ENCODE measurements at regions of chr22 and their contacts with region 1.

Region 1: DNA sequence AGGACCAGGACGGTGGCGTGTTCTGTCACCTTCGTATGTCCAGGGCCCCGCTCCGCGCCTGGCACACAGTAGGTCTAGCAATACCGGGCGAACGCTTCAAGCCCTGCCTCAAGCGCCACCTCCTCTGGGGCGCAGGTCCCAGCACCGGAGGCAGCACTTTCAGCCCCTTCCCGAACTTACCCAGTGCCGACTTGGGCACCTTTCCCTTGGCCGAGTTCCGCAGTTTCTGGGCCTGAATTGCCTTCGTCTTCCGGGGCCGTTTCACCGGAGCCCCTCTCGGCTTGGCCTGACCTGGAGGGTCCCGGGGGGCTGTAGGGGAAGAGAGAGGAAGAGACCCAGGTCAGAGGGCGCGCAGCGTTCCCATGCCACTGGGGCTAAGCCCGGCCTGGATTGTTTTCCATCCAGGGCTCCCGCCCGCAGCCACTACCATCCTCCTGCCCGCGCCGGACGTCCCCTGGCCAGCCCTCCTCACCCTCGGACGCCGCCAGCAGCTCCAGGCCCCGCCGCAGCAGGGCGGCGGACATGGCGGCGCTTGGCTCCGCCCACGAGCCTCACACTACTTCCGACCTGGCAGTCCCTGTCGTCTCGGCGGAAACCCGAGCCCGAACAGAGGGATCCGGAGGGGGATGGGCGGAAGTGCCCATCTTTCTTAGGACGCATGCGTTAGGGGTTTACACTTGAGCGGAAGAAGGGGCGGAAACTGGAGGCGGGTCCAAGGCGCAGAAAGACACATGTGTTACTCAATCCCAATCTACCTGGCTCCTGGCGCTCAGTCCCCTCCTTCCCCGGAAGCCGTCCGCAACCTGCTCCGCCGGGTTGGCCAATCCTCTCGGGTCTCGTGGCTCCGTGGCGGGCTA is at the start of gene RPS19BP1:
- DNase-seq: peak; percentile 96 to 99 (median 98)
- H3K4me3 ChIP-seq: peak within 1 kb of the TSS; percentile 58 to 100 (median 94)
- H3K27ac ChIP-seq: peak within 1 kb of the TSS; percentile 53 to 98 (median 93)
- H3K27me3 ChIP-seq: no peaks in the 10 kb centered on the region
- CTCF ChIP-seq: peak in 45 of 56 donors; percentile 4 to 56 (median 34)
- total RNA-seq, gene RPS19BP1: 44.3 to 109 (median 63.6) TPM

Region 2: DNA sequence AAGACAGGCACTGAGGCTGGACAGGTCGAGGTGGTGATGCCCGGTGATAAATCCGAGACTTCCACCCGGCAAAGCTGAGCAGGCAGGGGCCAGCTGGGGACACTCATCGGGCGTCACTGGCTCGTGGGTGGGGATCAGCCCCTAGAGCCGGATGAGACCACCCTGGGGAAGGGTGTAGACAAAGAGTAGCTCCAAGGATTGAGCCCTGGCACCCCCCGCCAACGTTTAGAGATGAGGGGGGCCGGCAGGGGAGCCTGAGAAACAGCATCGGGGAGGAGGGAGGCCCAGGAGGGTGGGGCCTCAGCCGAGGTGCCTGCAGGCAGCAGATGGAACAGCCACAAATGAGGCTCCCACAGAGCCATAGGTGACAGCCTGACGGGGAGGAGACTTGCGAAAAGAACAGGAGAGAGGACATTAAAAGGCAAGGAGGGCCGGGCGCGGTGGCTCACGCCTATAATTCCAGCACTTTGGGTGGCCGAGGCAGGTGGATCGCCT is 352.6 kb before region 1 on chr22:
- intact Hi-C with region 1: no loop called
- DNase-seq: no peak
- H3K4me3 ChIP-seq: no peak overlapping the region
- H3K27ac ChIP-seq: no peak overlapping the region
- H3K27me3 ChIP-seq: no peaks in the 10 kb centered on the region
- CTCF ChIP-seq: no peak

Region 3: GRCh38 chr22:39319270-39320022 is 213.0 kb before region 1 on chr22 and contains the start of gene RPL3:
- intact Hi-C with region 1: loop called in 1 of 2 experiments (anchors 5 kb)
- DNase-seq: peak; percentile 96 to 98 (median 97)
- H3K4me3 ChIP-seq: peak within 1 kb of the TSS; percentile 60 to 95 (median 79)
- H3K27ac ChIP-seq: peak within 1 kb of the TSS; percentile 91 to 100 (median 99)
- H3K27me3 ChIP-seq: no peaks in the 10 kb centered on the region
- CTCF ChIP-seq: peak in 48 of 56 donors; percentile 25 to 72 (median 50)
- total RNA-seq, gene RPL3: 562 to 963 (median 699) TPM

Region 4: GRCh38 chr22:39414886-39415285 is 117.6 kb before region 1 on chr22:
- intact Hi-C with region 1: no loop called
- DNase-seq: peak in 2 of 10 donors; percentile 55 to 85
- H3K4me3 ChIP-seq: no peak overlapping the region
- H3K27ac ChIP-seq: peak overlapping the region in 24 of 59 donors; percentile 1 to 73 (median 36)
- H3K27me3 ChIP-seq: no peaks in the 10 kb centered on the region
- CTCF ChIP-seq: no peak

Region 5: DNA sequence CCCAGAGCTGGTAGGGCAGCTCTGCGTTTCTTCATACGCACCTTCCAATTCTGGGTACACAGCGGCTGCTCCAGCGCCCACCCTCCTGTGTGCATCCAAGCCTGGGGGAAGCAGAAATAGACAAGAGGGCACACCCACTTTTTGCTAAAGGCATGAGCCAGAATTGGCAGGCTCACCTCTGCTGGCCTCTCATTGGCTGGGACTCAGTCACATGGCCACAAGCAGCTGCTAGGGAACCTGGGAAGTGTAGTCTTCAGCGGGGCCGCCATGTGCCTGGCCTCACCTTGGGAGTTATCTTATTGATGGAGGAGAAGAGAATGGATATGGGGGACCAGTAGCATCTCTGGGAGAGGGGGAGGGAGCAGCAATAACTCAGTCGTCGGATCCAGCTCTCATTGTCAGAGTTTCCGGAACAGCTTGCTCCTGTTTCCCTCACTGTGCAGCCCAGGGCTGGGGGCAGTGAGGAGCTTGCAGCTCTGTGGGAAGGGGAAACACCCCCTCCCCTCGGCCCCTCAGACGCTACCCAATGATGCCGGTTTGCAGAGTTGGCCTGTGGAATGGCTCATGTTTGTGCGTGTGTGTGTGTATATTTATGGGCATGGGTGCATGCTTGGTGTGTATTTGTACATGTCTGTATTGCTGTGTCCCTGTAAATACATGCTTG is 42.2 kb before region 1 on chr22:
- intact Hi-C with region 1: loop called in 1 of 2 experiments (anchors 5 kb)
- DNase-seq: peak; percentile 80 to 94 (median 88)
- H3K4me3 ChIP-seq: peak overlapping the region in 14 of 59 donors; percentile 0 to 45 (median 10)
- H3K27ac ChIP-seq: peak overlapping the region in 46 of 59 donors; percentile 1 to 84 (median 52)
- H3K27me3 ChIP-seq: no peaks in the 10 kb centered on the region
- CTCF ChIP-seq: no peak

Region 6: GRCh38 chr22:39643311-39644083 is 111.1 kb after region 1 on chr22:
- intact Hi-C with region 1: no loop called
- DNase-seq: peak in 1 of 10 donors; percentile 26
- H3K4me3 ChIP-seq: no peak overlapping the region
- H3K27ac ChIP-seq: peak overlapping the region in 6 of 59 donors; percentile 8 to 60 (median 29)
- H3K27me3 ChIP-seq: peaks cover 0 to 3% (median 0%) of the 10 kb centered on the region in 45 donors
- CTCF ChIP-seq: no peak

Region 7: DNA sequence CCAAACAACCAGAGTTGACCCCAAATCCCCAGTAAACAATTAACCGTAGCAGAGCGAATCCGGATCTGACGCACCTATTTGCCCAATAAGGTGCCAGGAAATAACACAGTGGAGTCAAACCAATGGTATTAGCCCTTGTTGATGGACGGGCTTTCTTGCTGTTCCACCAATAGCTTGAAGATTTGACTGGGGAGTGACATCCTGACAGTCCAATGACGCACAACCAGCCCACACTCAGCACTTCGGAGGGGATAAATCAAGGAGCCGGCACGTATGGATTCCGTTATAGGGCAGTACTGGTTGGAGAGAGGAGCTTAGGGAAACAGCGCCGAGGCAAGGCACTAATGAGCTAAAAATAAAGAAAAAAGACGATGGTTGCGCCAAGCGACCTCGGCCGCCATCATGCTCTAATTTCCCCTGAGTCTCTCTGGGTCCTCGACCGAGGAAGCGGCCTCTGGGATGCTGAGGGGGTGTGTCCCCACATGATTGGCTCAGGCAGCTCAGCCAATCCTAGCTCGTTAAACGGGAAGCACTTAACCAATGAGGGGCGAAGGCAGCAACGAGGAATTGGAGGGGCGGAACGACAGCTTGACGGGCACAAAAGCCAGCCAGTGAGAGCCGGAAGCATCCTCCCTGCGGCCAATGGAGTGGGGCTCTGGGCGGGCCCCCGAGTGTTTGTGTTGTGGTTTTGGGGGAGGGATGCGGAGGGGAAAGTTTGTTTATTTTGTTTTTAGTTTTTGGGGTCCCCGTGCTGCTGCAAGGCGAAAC is 511.8 kb after region 1 on chr22:
- intact Hi-C with region 1: loop called (anchors 5 kb)
- DNase-seq: peak; percentile 93 to 98 (median 98)
- H3K4me3 ChIP-seq: peak overlapping the region; percentile 50 to 98 (median 82)
- H3K27ac ChIP-seq: peak overlapping the region; percentile 80 to 100 (median 98)
- H3K27me3 ChIP-seq: peaks cover 0 to 22% (median 0%) of the 10 kb centered on the region in 45 donors
- CTCF ChIP-seq: peak in 7 of 56 donors; percentile 6 to 30 (median 13)

Region 8: DNA sequence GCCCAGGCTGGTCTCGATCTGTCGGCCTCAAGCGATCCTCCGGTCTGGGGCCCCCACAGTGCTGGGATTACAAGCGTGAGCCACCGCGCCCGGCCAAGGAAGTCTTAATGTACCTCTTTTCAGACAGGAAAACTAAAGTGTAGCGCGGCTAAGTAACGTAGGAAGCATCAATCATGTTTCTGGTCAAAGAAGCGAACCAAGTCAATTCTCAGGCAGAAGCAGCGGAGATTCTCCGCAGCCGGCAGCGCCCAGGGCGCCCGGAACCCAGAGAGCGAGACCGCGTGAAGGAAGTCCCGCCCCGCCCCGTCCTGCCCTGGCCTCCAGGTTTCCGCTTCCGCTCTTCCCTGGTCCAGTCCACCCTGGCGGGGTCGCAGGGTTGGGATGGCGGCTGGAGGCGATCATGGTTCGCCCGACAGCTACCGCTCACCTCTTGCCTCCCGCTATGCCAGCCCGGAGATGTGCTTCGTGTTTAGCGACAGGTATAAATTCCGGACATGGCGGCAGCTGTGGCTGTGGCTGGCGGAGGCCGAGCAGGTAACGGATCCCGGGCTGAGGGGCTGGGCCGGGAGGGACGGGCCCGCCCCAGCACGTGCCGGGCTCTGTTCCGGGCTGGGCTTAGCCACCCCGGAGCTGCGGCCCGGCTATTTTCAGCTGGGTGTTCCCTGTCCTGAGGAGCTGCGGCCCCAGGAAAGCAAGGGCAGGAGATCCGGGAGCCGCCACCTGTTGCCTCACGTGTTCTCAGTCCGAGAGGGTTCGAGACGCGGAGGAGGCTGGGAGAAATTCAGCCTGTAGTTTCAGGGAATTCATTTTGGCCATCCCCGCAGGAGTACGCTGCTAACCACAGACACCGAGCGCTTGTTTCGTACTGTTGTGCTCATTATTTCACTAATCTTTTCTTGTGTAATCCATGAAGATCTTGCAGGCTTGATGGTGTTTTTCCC is 814.0 kb after region 1 on chr22 and contains the start of gene ADSL:
- intact Hi-C with region 1: loop called (anchors 5 to 10 kb)
- DNase-seq: peak; percentile 71 to 92 (median 86)
- H3K4me3 ChIP-seq: peak within 1 kb of the TSS; percentile 52 to 96 (median 86)
- H3K27ac ChIP-seq: peak within 1 kb of the TSS; percentile 18 to 92 (median 83)
- H3K27me3 ChIP-seq: no peaks in the 10 kb centered on the region
- CTCF ChIP-seq: peak in 37 of 56 donors; percentile 3 to 55 (median 30)
- total RNA-seq, gene ADSL: 19.7 to 50.9 (median 31.0) TPM

Measured in dorsolateral prefrontal cortex (tissue), 120 donors.